Activated CD4-positive, alpha-beta T cell treated with anti-CD3 and anti-CD28 coated beads, Interleukin-2, amount 10 ng/mL, durations not matched to agents 24 days and 14 days (primary cell): ENCODE measurements at regions of chr3 and their contacts with region 1.

Region 1: DNA sequence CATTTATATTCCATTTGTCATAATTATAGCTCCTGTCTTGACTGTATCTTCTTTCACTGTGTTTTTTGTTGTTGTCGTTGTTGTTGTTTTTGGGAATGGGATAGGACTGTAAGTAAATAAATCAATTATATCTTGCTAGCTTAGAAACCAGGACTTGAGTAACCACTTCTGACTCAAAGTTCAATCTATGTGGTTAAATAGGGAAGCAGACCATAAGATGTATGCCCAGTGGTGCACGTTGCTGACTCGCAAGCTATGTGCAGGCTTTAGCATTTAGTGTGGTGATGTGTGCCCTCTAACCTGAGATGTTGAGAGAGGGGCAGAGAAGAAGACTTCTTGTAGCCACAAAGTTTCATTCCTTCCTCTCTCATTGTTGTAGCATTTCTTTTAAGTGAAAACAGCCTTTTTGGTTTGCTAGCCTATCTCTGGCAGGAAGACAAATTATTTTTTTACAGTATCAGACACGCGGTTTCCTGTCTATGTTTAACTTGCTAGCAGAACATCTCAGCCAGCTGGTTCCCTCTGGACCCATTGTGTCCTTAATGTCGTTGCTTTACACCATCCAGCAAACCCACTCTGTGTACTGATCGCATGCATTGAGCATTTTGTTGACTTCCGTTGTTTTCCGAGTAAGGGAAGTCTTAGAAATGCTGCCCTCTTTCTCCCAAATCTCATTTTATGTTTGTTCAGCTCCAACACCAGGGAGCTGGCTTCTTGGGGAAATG is 52.1 kb downstream of the TGFBR2 start:
- DNase-seq: peak; percentile 85
- H3K4me3 Mint-ChIP-seq: peak overlapping the region; percentile 84
- H3K27ac Mint-ChIP-seq: peak overlapping the region; percentile 97
- H3K4me1 Mint-ChIP-seq: peaks cover 85% of the 10 kb centered on the region
- H3K27me3 Mint-ChIP-seq: no peaks in the 10 kb centered on the region

Region 2: DNA sequence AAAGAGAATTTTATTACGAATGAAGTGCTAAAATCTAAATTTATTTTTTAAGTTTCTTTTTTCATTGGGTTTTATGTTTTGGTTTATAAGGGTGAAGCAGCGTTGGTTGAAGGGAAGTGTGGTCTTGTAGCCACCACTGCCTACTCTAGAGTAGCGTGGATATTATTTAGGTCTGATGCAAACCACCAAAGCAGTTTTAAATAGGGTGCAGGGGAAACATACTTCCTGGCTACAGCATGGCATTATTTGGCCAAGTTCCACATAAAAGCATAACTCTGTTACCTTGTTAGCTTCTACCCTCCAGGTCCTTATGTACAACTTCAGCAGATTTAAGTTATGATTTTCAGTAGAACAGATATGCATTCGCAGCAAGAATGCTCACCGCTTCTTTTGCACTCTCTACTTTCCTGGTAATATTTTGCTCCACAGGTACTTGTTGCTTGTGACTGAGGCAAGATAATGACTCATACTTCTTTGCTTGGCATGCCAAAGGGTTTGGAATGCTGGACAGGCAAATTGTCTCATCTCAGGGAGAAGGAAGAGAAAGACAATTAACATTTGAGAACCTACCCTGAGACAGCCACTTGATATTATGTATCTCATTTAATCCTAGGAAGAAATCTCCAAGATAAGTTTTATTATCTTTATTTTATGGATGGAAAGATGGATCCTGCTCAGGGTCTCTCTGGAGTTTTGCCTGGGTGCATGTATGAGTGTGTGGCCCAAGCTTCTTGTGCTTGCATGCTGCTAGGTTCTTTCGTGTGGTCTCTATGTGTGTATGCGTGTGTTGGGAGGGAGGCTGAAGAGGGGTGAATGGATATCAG is 46.7 kb before region 1 on chr3:
- intact Hi-C with region 1: loop called (anchors 1 kb)
- DNase-seq: peak; percentile 74
- H3K4me3 Mint-ChIP-seq: peak overlapping the region; percentile 90
- H3K27ac Mint-ChIP-seq: peak overlapping the region; percentile 86
- H3K4me1 Mint-ChIP-seq: peaks cover 67% of the 10 kb centered on the region
- H3K27me3 Mint-ChIP-seq: no peaks in the 10 kb centered on the region

Region 3: GRCh38 chr3:30623351-30623750 is 35.1 kb before region 1 on chr3:
- intact Hi-C with region 1: loop called (anchors 1 kb)
- DNase-seq: peak; percentile 58
- H3K4me3 Mint-ChIP-seq: peak overlapping the region; percentile 77
- H3K27ac Mint-ChIP-seq: peak overlapping the region; percentile 94
- H3K4me1 Mint-ChIP-seq: peaks cover 78% of the 10 kb centered on the region
- H3K27me3 Mint-ChIP-seq: no peaks in the 10 kb centered on the region

Region 4: GRCh38 chr3:30628901-30629590 is 29.4 kb before region 1 on chr3:
- intact Hi-C with region 1: loop called (anchors 1 kb)
- DNase-seq: peak; percentile 80
- H3K4me3 Mint-ChIP-seq: peak overlapping the region; percentile 57
- H3K27ac Mint-ChIP-seq: peak overlapping the region; percentile 99
- H3K4me1 Mint-ChIP-seq: peaks cover 76% of the 10 kb centered on the region
- H3K27me3 Mint-ChIP-seq: no peaks in the 10 kb centered on the region

Region 5: GRCh38 chr3:30644593-30645012 is 13.9 kb before region 1 on chr3:
- intact Hi-C with region 1: loop called (anchors 1 kb)
- DNase-seq: peak; percentile 89
- H3K4me3 Mint-ChIP-seq: peak overlapping the region; percentile 61
- H3K27ac Mint-ChIP-seq: peak overlapping the region; percentile 93
- H3K4me1 Mint-ChIP-seq: peaks cover 78% of the 10 kb centered on the region
- H3K27me3 Mint-ChIP-seq: no peaks in the 10 kb centered on the region

Region 6: GRCh38 chr3:31634481-31634880 is 976.0 kb after region 1 on chr3:
- intact Hi-C with region 1: loop called (anchors 10 kb)
- DNase-seq: no peak
- H3K4me3 Mint-ChIP-seq: no peak overlapping the region
- H3K27ac Mint-ChIP-seq: peak overlapping the region; percentile 9
- H3K4me1 Mint-ChIP-seq: peaks cover 26% of the 10 kb centered on the region
- H3K27me3 Mint-ChIP-seq: no peaks in the 10 kb centered on the region